Stomach (tissue), 19 donors: ENCODE measurements at regions of chr13 and their contacts with region 1.

Region 1: GRCh38 chr13:20713751-20714150 is 10.3 kb downstream of the IL17D start:
- DNase-seq: peak in 1 of 2 donors; percentile 35
- H3K4me3 ChIP-seq: no peak overlapping the region
- H3K27ac ChIP-seq: peak overlapping the region in 2 of 5 donors; percentile 67 to 68
- H3K4me1 ChIP-seq: peaks cover 8 to 31% (median 20%) of the 10 kb centered on the region in 4 donors
- H3K27me3 ChIP-seq: peaks cover 0 to 12% (median 0%) of the 10 kb centered on the region in 3 donors
- CTCF ChIP-seq: no peak
- EP300 ChIP-seq: no peak
- POLR2A ChIP-seq: no peak

Region 2: GRCh38 chr13:19927117-19927748 is 786.5 kb before region 1 on chr13:
- intact Hi-C with region 1: no loop called
- DNase-seq: peak in 1 of 2 donors; percentile 12
- H3K4me3 ChIP-seq: no peak overlapping the region
- H3K27ac ChIP-seq: no peak overlapping the region
- H3K4me1 ChIP-seq: peaks cover 0 to 10% (median 9%) of the 10 kb centered on the region in 4 donors
- H3K27me3 ChIP-seq: no peaks in the 10 kb centered on the region
- CTCF ChIP-seq: peak in 4 of 7 experiments; percentile 24 to 48 (median 36)
- EP300 ChIP-seq: no peak
- POLR2A ChIP-seq: no peak

Region 3: DNA sequence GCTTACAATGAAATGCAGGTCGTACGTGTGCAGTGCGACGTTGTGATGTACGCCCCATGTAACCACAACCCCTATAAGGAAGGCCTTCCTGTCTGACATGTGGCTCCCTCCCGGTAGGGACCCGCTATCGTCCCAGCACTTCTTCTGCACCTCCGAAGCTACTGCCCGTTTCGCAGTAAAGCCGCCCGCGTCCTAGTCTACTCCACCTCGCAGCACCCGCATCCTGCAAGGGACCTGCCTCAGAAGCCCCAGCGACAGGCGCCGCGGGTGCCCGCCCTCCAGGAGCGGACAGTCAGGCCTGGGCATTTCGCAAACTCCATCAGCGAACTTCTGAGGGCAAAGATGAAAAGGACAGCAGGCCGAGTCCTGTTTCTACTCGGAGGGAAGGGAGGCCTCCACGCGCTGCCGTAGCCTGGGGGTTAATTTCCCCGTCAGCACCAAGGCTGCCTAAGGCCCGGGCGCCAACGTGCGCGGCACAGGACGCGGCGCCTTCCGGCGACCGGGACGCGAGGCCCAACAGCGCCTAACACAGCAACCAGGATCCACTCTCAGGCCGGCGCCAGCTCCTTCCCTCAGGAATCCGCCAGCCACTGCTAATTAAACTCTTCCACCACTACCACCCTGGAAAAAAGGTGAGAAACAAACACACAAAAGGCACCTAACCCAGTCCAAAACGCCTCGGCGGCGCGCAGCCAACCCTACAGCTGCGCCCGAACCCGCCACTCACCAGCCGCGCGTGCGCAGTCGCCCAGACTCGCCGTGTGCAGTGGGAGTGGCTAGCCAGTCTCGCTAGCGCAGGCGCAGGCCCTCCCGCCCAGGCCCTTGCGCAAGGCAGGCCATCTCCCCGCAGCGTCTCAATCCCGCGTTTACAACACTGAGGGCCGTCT is 59.7 kb after region 1 on chr13 and contains the start of gene EEF1AKMT1:
- intact Hi-C with region 1: loop called (anchors 10 kb)
- DNase-seq: peak; percentile 95 to 98
- H3K4me3 ChIP-seq: peak within 1 kb of the TSS; percentile 54 to 72 (median 58)
- H3K27ac ChIP-seq: peak within 1 kb of the TSS; percentile 87 to 93 (median 90)
- H3K4me1 ChIP-seq: peaks cover 11 to 32% (median 16%) of the 10 kb centered on the region in 4 donors
- H3K27me3 ChIP-seq: no peaks in the 10 kb centered on the region
- CTCF ChIP-seq: no peak
- EP300 ChIP-seq: no peak
- POLR2A ChIP-seq: peak in 2 of 4 donors; percentile 27 to 31
- total RNA-seq, gene EEF1AKMT1: 3.1 to 14.1 (median 8.7) TPM in 4 of 5 donors, not detected in the other

Region 4: DNA sequence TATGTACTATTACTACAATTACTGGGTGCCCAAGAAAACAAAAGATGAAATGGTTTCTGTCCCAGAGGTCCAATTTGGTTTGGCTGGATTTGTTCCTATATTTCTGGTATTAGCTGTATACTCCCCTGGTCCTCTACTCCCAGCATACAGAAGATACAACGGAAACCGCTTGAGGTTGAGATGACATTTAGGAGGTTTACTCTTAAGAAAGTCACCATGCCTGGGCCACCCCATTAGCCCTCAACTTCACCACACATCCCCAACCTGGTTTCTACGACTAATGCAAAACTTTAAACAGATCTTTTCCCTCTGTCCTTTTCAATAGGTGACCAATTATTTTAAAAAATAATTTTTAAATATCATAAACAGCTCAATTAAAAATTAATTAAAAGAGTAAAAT is 106.0 kb after region 1 on chr13:
- intact Hi-C with region 1: no loop called
- DNase-seq: no peak
- H3K4me3 ChIP-seq: no peak overlapping the region
- H3K27ac ChIP-seq: no peak overlapping the region
- H3K4me1 ChIP-seq: peaks cover 0 to 14% (median 6%) of the 10 kb centered on the region in 4 donors
- H3K27me3 ChIP-seq: no peaks in the 10 kb centered on the region
- CTCF ChIP-seq: no peak
- EP300 ChIP-seq: no peak
- POLR2A ChIP-seq: no peak

Region 5: GRCh38 chr13:21043898-21044297 is 330.1 kb after region 1 on chr13:
- intact Hi-C with region 1: no loop called
- DNase-seq: peak in 1 of 2 donors; percentile 65
- H3K4me3 ChIP-seq: no peak overlapping the region
- H3K27ac ChIP-seq: peak overlapping the region in 3 of 5 donors; percentile 22 to 78 (median 55)
- H3K4me1 ChIP-seq: peaks cover 18 to 93% (median 62%) of the 10 kb centered on the region in 4 donors
- H3K27me3 ChIP-seq: no peaks in the 10 kb centered on the region
- CTCF ChIP-seq: no peak
- EP300 ChIP-seq: peak; percentile 49
- POLR2A ChIP-seq: no peak